ENCODE measurements at regions of chr10 and their contacts with region 1.

Region 1: GRCh38 chr10:16944402-16944801 is 127.2 kb upstream of the RSU1 start:
- DNase-seq: no peak
- ATAC-seq: no peak
- H3K4me3 ChIP-seq: no peak overlapping the region
- H3K4me3 Mint-ChIP-seq: no peak overlapping the region
- H3K27ac ChIP-seq: no peak overlapping the region
- H3K27ac Mint-ChIP-seq: no peak overlapping the region
- H3K4me1 ChIP-seq: peaks cover 2% of the 10 kb centered on the region
- H3K4me1 Mint-ChIP-seq: peaks cover 23% of the 10 kb centered on the region
- H3K27me3 ChIP-seq: no peaks in the 10 kb centered on the region
- H3K27me3 Mint-ChIP-seq: no peaks in the 10 kb centered on the region
- CTCF ChIP-seq: no peak

Region 2: GRCh38 chr10:16853201-16853600 is 91.2 kb before region 1 on chr10:
- CTCF ChIA-PET with region 1: no interaction called
- POLR2A ChIA-PET with region 1: no interaction called
- intact Hi-C with region 1: loop called in 1 of 2 experiments (anchors 10 kb)
- DNase-seq: peak in 3 of 14 experiments; percentile 13 to 35 (median 16)
- ATAC-seq: no peak
- H3K4me3 ChIP-seq: no peak overlapping the region
- H3K4me3 Mint-ChIP-seq: no peak overlapping the region
- H3K27ac ChIP-seq: no peak overlapping the region
- H3K27ac Mint-ChIP-seq: no peak overlapping the region
- H3K4me1 ChIP-seq: no peaks in the 10 kb centered on the region
- H3K4me1 Mint-ChIP-seq: no peaks in the 10 kb centered on the region
- H3K27me3 ChIP-seq: no peaks in the 10 kb centered on the region
- H3K27me3 Mint-ChIP-seq: no peaks in the 10 kb centered on the region
- CTCF ChIP-seq: no peak

Region 3: DNA sequence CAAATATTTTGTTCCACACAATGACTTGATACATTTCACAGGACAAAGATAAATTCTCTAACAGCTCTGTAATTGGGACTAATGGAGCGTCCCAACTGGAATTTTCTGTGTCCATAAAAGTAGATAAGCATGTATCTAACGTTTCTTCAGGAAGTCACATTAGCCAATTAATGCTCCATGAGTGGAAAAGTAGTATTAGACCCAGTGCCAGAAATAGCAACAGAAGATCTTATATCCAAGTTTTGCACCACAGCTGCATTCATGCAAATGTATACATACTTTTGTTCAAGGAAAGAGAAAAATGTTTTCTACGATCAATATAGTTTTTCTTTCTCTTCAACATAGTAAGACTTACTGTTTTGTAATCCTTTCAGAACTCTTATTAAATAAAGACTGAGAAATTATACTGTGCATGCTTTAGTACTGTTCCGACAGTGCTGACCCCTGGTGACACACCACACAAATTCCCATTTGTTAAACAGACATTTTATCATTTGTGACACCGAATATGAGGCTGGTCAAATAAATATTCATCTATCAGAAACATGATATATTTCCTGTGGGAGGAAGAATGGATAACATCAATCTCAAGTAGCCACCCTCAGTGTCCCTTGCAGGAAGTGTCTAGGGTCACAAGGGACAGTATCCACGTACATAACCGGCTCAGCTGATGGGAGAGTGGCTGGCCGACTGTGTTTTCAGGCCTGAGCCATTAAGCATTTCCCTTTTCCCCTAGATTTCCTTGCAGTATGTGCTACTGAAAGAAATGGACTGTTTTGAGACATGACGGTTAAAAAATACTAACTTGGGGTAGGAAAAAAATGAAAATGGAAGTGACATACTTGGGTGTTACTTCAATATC is 25.1 kb before region 1 on chr10:
- CTCF ChIA-PET with region 1: no interaction called
- POLR2A ChIA-PET with region 1: no interaction called
- intact Hi-C with region 1: no loop called
- DNase-seq: no peak
- ATAC-seq: no peak
- H3K4me3 ChIP-seq: no peak overlapping the region
- H3K4me3 Mint-ChIP-seq: no peak overlapping the region
- H3K27ac ChIP-seq: no peak overlapping the region
- H3K27ac Mint-ChIP-seq: no peak overlapping the region
- H3K4me1 ChIP-seq: no peaks in the 10 kb centered on the region
- H3K4me1 Mint-ChIP-seq: no peaks in the 10 kb centered on the region
- H3K27me3 ChIP-seq: no peaks in the 10 kb centered on the region
- H3K27me3 Mint-ChIP-seq: no peaks in the 10 kb centered on the region
- CTCF ChIP-seq: no peak

Region 4: DNA sequence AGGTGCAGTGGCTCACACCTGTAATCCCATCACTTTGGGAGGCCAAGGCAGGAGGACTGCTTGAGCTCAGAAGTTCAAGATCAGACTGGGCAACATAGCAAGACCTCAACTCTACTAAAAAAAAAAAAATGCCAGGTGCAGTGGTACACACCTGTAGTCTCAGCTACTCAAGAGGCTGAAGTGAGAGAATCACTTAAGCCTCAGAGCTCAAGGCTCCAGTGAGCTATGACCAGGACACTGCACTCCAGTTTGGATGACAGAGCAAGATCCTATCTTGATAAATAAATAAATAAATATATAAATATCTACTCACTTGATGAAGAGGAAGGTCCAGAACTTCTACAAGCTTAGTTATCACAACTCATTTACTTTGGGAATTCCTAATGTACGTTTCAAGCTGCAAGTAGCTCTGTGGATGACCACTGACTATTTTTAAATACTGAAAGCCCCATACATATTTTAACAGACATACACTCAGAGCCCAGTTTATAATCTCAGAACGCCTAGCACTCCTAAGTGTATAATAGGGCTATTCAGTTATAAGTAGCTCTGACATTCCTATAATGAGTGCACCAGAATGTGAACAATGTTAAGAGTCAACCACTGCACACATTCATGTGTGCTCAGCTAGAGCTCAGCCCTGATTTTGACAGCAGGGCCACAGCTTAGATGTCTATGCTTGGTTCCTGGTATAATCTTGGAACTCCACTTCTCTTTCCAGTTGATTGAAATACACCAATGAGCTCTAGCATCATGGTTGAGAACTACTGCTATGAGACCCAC is 66.2 kb after region 1 on chr10:
- CTCF ChIA-PET with region 1: no interaction called
- POLR2A ChIA-PET with region 1: no interaction called
- intact Hi-C with region 1: loop called in 1 of 2 experiments (anchors 5 kb)
- DNase-seq: no peak
- ATAC-seq: no peak
- H3K4me3 ChIP-seq: no peak overlapping the region
- H3K4me3 Mint-ChIP-seq: no peak overlapping the region
- H3K27ac ChIP-seq: no peak overlapping the region
- H3K27ac Mint-ChIP-seq: no peak overlapping the region
- H3K4me1 ChIP-seq: peaks cover 15% of the 10 kb centered on the region
- H3K4me1 Mint-ChIP-seq: peaks cover 46% of the 10 kb centered on the region
- H3K27me3 ChIP-seq: no peaks in the 10 kb centered on the region
- H3K27me3 Mint-ChIP-seq: no peaks in the 10 kb centered on the region
- CTCF ChIP-seq: no peak